ENCODE measurements at regions of chr3 and their contacts with region 1.

Region 1: GRCh38 chr3:49093853-49094767 is at the start of gene QRICH1:
- DNase-seq: peak; percentile 89 to 97 (median 96)
- H3K4me3 ChIP-seq: peak within 1 kb of the TSS; percentile 60 to 99 (median 91)
- H3K27ac ChIP-seq: peak within 1 kb of the TSS; percentile 81 to 100 (median 96)
- H3K27me3 ChIP-seq: no peaks in the 10 kb centered on the region
- CTCF ChIP-seq: peak in 45 of 56 donors; percentile 8 to 65 (median 33)
- total RNA-seq, gene QRICH1: 86.4 to 157 (median 121) TPM

Region 2: DNA sequence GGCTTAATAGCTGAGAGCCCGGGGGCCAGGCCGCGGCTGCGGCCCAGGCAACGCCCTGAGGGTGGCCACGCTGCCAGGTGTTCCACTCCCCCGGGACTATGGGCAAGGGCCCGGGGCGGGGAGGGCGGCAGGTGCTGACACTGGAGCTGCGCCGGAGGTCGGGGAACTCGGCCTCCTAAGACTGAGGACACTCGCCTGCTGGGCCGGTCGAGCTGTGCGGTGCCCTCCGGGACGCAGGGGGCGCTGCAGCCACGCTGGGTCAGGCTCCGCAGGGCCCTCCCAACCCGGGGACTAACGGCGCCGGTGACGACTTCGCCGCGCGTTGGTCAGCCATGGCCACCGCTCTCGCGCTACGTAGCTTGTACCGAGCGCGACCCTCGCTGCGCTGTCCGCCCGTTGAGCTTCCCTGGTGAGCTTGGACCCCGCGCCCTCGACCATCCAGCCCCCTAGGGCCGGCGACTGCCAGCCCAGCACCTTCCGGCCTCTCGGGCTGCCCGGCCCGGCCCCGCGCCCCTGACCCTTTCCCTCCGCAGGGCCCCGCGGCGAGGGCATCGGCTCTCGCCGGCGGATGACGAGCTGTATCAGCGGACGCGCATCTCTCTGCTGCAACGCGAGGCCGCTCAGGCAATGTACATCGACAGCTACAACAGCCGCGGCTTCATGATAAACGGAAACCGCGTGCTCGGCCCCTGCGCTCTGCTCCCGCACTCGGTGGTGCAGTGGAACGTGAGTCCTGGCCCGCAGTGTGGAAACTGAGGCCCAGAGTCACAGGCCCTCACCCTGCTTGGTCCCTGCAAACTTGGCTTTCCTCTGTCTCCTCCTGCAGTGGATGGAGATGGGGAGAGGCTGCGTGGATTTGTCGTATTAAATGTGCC is 72.1 kb before region 1 on chr3 and contains the start of gene NDUFAF3:
- intact Hi-C with region 1: loop called (anchors 5 kb)
- DNase-seq: peak; percentile 85 to 95 (median 91)
- H3K4me3 ChIP-seq: peak within 1 kb of the TSS; percentile 73 to 100 (median 98)
- H3K27ac ChIP-seq: peak within 1 kb of the TSS; percentile 76 to 99 (median 97)
- H3K27me3 ChIP-seq: no peaks in the 10 kb centered on the region
- CTCF ChIP-seq: peak; percentile 80 to 99 (median 96)
- total RNA-seq, gene NDUFAF3: 57.3 to 129 (median 81.1) TPM

Region 3: DNA sequence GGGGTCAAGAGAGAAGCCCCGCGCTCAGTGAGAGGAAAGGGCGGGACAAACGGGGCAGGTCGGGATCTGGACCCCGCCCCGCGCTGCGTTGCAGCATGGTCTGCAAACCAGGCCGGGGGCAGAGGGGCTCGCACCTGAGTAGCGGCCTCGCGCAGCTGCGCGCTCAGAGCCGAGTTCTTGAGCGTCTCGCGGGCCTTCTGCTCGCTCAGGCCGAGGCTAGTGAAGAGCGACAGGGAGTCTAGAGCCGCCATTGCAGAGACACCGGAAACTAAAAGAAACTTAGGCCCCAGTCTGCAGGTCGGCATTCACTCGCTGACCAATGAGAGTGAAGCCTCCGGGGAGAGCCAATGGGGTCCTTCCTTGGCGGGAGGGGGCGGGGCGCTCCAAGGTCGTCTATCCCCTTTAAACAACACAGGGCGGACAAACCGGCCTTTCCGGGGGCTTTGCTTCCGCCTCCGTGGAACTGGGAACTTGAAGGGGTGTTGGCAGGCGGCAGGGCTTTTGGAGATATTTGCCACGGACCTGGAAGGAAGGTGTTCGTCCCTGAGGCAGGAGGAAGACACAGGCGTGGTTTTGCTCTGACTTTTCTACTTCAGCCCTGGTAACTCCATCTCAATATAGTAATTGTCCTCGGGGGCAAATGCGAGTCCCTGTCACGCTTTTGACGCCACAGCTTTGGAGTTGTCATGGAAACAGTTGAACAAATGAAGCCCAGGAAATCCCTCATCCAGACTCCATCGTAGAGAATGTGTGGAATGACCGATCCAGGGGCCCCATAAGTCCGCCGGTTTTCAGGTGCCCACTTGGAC is 10.6 kb after region 1 on chr3 and contains the start of gene QARS1:
- intact Hi-C with region 1: loop called in 1 of 2 experiments (anchors 1 kb)
- DNase-seq: peak; percentile 89 to 98 (median 96)
- H3K4me3 ChIP-seq: peak within 1 kb of the TSS; percentile 62 to 100 (median 91)
- H3K27ac ChIP-seq: peak within 1 kb of the TSS in 54 of 59 donors; percentile 15 to 91 (median 76)
- H3K27me3 ChIP-seq: no peaks in the 10 kb centered on the region
- CTCF ChIP-seq: peak in 5 of 56 donors; percentile 12 to 25 (median 23)
- total RNA-seq, gene QARS1: 56.5 to 123 (median 85.5) TPM

Region 4: GRCh38 chr3:49120438-49121131 is 26.5 kb after region 1 on chr3 and contains the start of gene USP19:
- intact Hi-C with region 1: loop called in 1 of 2 experiments (anchors 1 kb)
- DNase-seq: peak; percentile 93 to 97 (median 95)
- H3K4me3 ChIP-seq: peak within 1 kb of the TSS; percentile 51 to 100 (median 96)
- H3K27ac ChIP-seq: peak within 1 kb of the TSS; percentile 68 to 98 (median 94)
- H3K27me3 ChIP-seq: no peaks in the 10 kb centered on the region
- CTCF ChIP-seq: peak in 27 of 56 donors; percentile 6 to 52 (median 26)
- total RNA-seq, gene USP19: 46.6 to 83.3 (median 64.9) TPM

Region 5: GRCh38 chr3:49133226-49133951 is 39.3 kb after region 1 on chr3:
- intact Hi-C with region 1: loop called in 1 of 2 experiments (anchors 5 kb)
- DNase-seq: peak; percentile 64 to 88 (median 79)
- H3K4me3 ChIP-seq: peak overlapping the region; percentile 30 to 96 (median 69)
- H3K27ac ChIP-seq: peak overlapping the region in 50 of 59 donors; percentile 5 to 85 (median 69)
- H3K27me3 ChIP-seq: peaks cover 0 to 4% (median 0%) of the 10 kb centered on the region in 45 donors
- CTCF ChIP-seq: peak in 4 of 56 donors; percentile 0 to 27 (median 14)

Region 6: DNA sequence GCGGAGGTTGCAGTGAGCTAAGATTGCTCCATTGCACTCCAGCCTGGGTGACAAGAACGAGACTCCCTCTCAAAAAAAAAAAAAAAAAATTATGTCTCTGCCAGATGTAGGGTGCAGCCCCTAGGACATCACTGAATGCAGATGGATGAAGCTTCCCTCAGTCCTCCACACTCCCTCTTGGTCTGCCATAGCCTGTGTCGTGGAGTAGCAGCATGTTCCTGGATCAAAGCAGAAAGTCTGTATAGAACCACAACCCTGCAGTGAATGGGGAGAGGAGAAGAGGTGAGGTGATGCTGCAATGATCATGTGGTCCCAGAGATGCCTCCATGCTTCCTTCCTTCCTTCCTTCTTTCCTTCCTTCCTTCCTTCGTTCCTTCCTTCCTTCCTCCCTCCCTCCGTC is 54.0 kb after region 1 on chr3:
- intact Hi-C with region 1: no loop called
- DNase-seq: no peak
- H3K4me3 ChIP-seq: no peak overlapping the region
- H3K27ac ChIP-seq: no peak overlapping the region
- H3K27me3 ChIP-seq: no peaks in the 10 kb centered on the region
- CTCF ChIP-seq: no peak

Region 7: GRCh38 chr3:50627407-50628051 is 1533.4 kb after region 1 on chr3:
- intact Hi-C with region 1: no loop called
- DNase-seq: peak in 7 of 10 donors; percentile 54 to 72 (median 59)
- H3K4me3 ChIP-seq: no peak overlapping the region
- H3K27ac ChIP-seq: peak overlapping the region in 1 of 59 donors; percentile 37
- H3K27me3 ChIP-seq: no peaks in the 10 kb centered on the region
- CTCF ChIP-seq: peak in 54 of 56 donors; percentile 18 to 69 (median 49)